ENCODE measurements at regions of chr12 and their contacts with region 1.

Region 1: GRCh38 chr12:75505706-75506312 is 5.6 kb downstream of the KRR1 start:
- DNase-seq: peak in 3 of 14 experiments; percentile 42 to 57 (median 56)
- ATAC-seq: peak; percentile 69
- H3K4me3 ChIP-seq: no peak overlapping the region
- H3K4me3 Mint-ChIP-seq: no peak overlapping the region
- H3K27ac ChIP-seq: no peak overlapping the region
- H3K27ac Mint-ChIP-seq: peak overlapping the region; percentile 31
- H3K4me1 ChIP-seq: peaks cover 5% of the 10 kb centered on the region
- H3K4me1 Mint-ChIP-seq: peaks cover 28% of the 10 kb centered on the region
- H3K27me3 ChIP-seq: no peaks in the 10 kb centered on the region
- H3K27me3 Mint-ChIP-seq: no peaks in the 10 kb centered on the region
- CTCF ChIP-seq: peak; percentile 72

Region 2: DNA sequence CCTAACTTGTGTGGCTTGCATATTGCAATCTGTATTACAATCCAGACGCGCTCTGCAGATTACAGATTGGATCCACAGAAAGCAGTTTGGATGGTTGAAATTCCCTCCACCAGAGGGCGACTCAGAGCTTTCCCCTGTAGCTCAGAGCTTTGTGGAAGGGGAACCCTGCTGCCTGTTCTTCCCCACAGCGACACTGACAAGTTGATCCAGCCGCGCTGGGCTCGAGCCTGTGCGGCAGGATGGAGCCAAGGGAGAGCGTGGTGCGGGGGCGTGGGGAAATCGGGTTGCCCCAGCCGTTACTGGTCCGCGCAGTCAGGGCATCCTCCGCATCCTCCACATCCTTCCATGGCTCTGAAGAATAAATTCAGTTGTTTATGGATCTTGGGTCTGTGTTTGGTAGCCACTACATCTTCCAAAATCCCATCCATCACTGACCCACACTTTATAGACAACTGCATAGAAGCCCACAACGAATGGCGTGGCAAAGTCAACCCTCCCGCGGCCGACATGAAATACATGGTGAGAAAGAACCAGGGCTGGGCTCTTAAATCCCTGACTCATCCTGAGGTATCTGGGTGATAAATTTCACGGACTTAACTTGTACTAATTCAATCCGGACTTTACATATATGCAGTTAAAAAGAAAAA is 171.3 kb before region 1 on chr12 and contains the start of gene GLIPR1L1:
- CTCF ChIA-PET with region 1: interaction called, 7 read pairs
- POLR2A ChIA-PET with region 1: interaction called, 6 read pairs
- intact Hi-C with region 1: loop called (anchors 1 to 2 kb)
- DNase-seq: peak; percentile 67 to 90 (median 78)
- ATAC-seq: peak; percentile 79
- H3K4me3 ChIP-seq: peak within 1 kb of the TSS; percentile 39
- H3K4me3 Mint-ChIP-seq: peak within 1 kb of the TSS; percentile 57
- H3K27ac ChIP-seq: no peak within 1 kb of the TSS
- H3K27ac Mint-ChIP-seq: no peak within 1 kb of the TSS
- H3K4me1 ChIP-seq: peaks cover 17% of the 10 kb centered on the region
- H3K4me1 Mint-ChIP-seq: peaks cover 21% of the 10 kb centered on the region
- H3K27me3 ChIP-seq: peaks cover 12 to 16% of the 10 kb centered on the region in 2 experiments
- H3K27me3 Mint-ChIP-seq: peaks cover 35% of the 10 kb centered on the region
- CTCF ChIP-seq: peak; percentile 90
- total RNA-seq, gene GLIPR1L1: not detected

Region 3: DNA sequence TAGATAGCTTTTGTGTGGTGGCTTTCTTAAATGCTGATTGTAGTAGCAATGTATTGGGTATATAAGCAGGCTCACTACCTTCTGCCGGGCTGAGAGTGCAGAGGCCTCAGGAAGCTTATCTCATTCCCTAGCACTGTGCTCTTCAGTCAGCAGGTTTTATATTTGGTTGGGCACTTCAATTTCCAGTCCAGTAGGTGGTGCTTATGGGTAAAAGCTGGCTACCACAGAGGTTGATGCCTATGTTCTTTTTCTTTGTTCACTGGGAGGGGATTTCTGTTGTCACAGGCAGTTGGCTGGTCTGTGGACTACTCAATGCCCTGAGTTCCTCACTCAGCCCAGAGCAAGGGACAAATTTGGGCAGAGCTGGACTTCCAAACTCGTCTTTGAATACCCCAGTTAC is 68.2 kb before region 1 on chr12:
- CTCF ChIA-PET with region 1: interaction called, 8 read pairs
- POLR2A ChIA-PET with region 1: interaction called, 3 read pairs
- intact Hi-C with region 1: loop called in 1 of 2 experiments (anchors 1 kb)
- DNase-seq: peak in 5 of 14 experiments; percentile 6 to 79 (median 63)
- ATAC-seq: peak; percentile 78
- H3K4me3 ChIP-seq: no peak overlapping the region
- H3K4me3 Mint-ChIP-seq: no peak overlapping the region
- H3K27ac ChIP-seq: no peak overlapping the region
- H3K27ac Mint-ChIP-seq: no peak overlapping the region
- H3K4me1 ChIP-seq: peaks cover 13% of the 10 kb centered on the region
- H3K4me1 Mint-ChIP-seq: peaks cover 15% of the 10 kb centered on the region
- H3K27me3 ChIP-seq: no peaks in the 10 kb centered on the region
- H3K27me3 Mint-ChIP-seq: peaks cover 14% of the 10 kb centered on the region
- CTCF ChIP-seq: peak; percentile 40

Region 4: DNA sequence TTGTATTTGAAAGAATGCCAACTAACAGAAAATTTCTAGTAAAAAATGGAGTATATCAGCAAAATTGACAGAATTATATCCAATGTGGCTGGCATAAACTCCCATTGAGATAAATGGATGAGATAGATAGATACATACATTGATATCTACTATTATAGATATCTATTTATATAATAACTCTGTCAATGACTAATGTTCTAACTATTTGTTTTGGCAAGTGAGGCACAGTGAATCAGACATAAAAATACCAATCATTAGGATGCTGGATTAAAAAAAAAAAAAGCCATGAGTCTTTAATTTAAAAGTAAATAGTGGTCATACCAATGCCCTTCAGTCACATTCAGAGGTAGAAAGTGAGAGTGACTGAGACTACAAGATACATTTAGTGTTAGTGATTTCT is 59.0 kb before region 1 on chr12:
- CTCF ChIA-PET with region 1: no interaction called
- POLR2A ChIA-PET with region 1: no interaction called
- intact Hi-C with region 1: loop called in 1 of 2 experiments (anchors 2 kb)
- DNase-seq: no peak
- ATAC-seq: no peak
- H3K4me3 ChIP-seq: no peak overlapping the region
- H3K4me3 Mint-ChIP-seq: no peak overlapping the region
- H3K27ac ChIP-seq: no peak overlapping the region
- H3K27ac Mint-ChIP-seq: no peak overlapping the region
- H3K4me1 ChIP-seq: no peaks in the 10 kb centered on the region
- H3K4me1 Mint-ChIP-seq: no peaks in the 10 kb centered on the region
- H3K27me3 ChIP-seq: no peaks in the 10 kb centered on the region
- H3K27me3 Mint-ChIP-seq: peaks cover 6% of the 10 kb centered on the region
- CTCF ChIP-seq: no peak

Region 5: DNA sequence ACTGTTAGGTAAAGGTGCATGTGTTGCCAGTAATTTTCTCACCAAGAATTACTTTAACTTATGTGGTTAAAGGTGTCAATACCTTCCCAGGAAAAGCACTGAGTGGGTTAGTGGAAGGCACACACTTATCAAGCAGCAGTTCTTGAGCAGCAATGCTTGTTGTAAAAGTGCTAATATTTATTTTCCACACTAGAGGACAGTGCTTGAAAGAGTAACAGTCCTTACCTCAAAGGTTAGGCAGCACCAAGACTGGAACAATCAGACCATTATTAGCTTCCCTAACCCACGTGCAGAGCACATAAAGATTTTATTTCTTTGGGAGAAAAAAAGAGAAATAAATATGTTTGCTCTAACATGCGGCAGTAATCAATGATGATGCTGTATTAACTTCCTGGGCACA is 54.4 kb after region 1 on chr12:
- CTCF ChIA-PET with region 1: no interaction called
- POLR2A ChIA-PET with region 1: no interaction called
- intact Hi-C with region 1: no loop called
- DNase-seq: peak in 1 of 14 experiments; percentile 9
- ATAC-seq: no peak
- H3K4me3 ChIP-seq: no peak overlapping the region
- H3K4me3 Mint-ChIP-seq: no peak overlapping the region
- H3K27ac ChIP-seq: no peak overlapping the region
- H3K27ac Mint-ChIP-seq: no peak overlapping the region
- H3K4me1 ChIP-seq: no peaks in the 10 kb centered on the region
- H3K4me1 Mint-ChIP-seq: no peaks in the 10 kb centered on the region
- H3K27me3 ChIP-seq: peaks cover 4 to 7% of the 10 kb centered on the region in 2 experiments
- H3K27me3 Mint-ChIP-seq: peaks cover 28% of the 10 kb centered on the region
- CTCF ChIP-seq: no peak

Region 6: DNA sequence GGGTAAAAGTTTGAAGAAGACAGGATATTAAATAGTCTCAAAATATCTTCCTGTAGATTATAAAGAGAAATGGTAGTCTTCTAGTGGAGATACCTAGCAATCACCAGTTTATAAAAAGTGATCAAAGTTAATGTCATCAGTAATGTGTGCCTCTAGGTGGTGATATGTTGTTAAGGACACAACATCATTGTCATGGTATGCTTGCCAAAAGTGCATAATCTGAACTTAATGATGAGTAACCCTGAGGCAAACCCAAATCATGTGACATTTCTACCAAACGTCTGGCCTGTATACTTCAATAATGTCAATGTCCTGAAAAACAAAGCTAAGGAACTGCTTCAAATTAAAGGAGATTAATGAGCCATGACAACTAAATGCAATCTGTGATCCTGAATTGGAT is 311.1 kb after region 1 on chr12:
- CTCF ChIA-PET with region 1: no interaction called
- POLR2A ChIA-PET with region 1: no interaction called
- intact Hi-C with region 1: no loop called
- DNase-seq: peak in 3 of 14 experiments; percentile 35 to 46 (median 39)
- ATAC-seq: peak; percentile 69
- H3K4me3 ChIP-seq: no peak overlapping the region
- H3K4me3 Mint-ChIP-seq: no peak overlapping the region
- H3K27ac ChIP-seq: no peak overlapping the region
- H3K27ac Mint-ChIP-seq: no peak overlapping the region
- H3K4me1 ChIP-seq: peaks cover 11% of the 10 kb centered on the region
- H3K4me1 Mint-ChIP-seq: peaks cover 4% of the 10 kb centered on the region
- H3K27me3 ChIP-seq: no peaks in the 10 kb centered on the region
- H3K27me3 Mint-ChIP-seq: peaks cover 1% of the 10 kb centered on the region
- CTCF ChIP-seq: no peak

Measured in CD4-positive, alpha-beta T cell (primary cell).